OCI-LY7 (cell line): ENCODE measurements at regions of chr12 and their contacts with region 1.

Region 1: DNA sequence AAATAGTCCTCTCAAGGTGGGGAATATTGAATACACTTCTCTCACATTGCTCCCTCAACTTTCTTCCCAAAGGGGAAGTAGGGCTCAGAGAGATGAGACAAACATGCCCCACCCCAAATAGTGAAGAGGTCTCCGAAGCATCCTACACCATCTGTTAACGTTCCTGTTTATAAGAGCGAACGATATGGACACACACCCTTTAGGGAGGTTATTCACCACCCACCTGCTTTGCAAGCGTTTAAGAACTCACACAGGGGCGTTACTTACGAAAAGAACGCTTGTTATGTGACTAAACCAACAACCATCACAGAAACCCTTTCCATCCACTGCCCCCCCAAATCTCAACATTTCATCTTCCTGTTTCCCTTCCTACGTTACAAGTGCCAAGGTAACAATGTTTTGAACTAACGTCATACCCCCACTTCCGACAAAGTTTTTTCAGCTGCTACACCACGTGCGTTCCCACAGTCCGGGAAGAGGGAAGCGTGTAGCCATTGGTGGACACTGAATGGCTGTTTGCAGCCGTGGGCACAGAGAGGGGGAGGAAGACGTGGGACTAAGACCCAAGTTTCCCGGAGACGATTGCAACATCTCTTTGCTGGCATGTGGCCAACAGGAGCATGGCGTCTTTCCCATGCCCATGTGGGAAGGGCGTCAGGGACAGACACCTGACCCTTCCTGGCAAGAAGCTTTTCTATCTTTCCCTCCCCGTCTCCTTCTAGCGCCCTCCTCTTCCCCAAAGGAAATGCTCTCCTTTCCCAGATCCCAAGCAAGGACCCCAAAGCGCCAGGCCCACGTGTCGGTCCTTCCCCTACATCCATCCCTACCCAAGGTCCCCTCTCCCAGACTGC is 1.2 kb downstream of the YBX3 start:
- DNase-seq: peak; percentile 71
- H3K4me3 ChIP-seq: peak overlapping the region; percentile 80
- H3K27ac ChIP-seq: peak overlapping the region; percentile 55
- H3K4me1 ChIP-seq: peaks cover 28% of the 10 kb centered on the region
- CTCF ChIP-seq: no peak

Region 2: DNA sequence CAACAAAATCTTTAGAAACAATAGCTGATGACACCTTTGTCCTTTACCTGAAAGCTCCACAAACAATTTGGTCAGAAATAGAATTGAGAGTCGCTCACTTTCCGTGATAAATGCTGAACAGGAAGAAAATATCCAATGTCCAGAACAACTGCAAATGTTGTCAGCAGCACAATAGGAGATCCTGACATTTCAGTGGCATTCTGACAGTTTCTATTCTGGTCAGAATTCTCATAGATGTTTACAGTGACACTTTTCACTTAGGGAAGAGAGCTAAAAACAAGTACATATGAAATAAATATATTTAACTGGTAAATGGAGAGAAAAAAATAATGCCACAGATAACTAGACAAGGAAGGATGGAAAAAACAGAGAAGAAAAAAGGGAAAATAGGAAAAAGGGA is 147.6 kb before region 1 on chr12:
- CTCF ChIA-PET with region 1: no interaction called
- POLR2A ChIA-PET with region 1: no interaction called
- intact Hi-C with region 1: no loop called
- DNase-seq: no peak
- H3K4me3 ChIP-seq: no peak overlapping the region
- H3K27ac ChIP-seq: no peak overlapping the region
- H3K4me1 ChIP-seq: no peaks in the 10 kb centered on the region
- CTCF ChIP-seq: no peak

Region 3: GRCh38 chr12:10613349-10614055 is 108.4 kb before region 1 on chr12 and contains the start of gene MAGOHB:
- CTCF ChIA-PET with region 1: no interaction called
- POLR2A ChIA-PET with region 1: interaction called, 6 read pairs
- intact Hi-C with region 1: loop called (anchors 1 kb)
- DNase-seq: peak; percentile 97
- H3K4me3 ChIP-seq: peak within 1 kb of the TSS; percentile 91
- H3K27ac ChIP-seq: peak within 1 kb of the TSS; percentile 60
- H3K4me1 ChIP-seq: peaks cover 21% of the 10 kb centered on the region
- CTCF ChIP-seq: no peak
- total RNA-seq, gene MAGOHB: 35.6 and 44.4 TPM in 2 replicates

Region 4: GRCh38 chr12:10749700-10750384 is 28.0 kb after region 1 on chr12:
- CTCF ChIA-PET with region 1: no interaction called
- POLR2A ChIA-PET with region 1: interaction called, 4 read pairs
- intact Hi-C with region 1: loop called (anchors 2 kb)
- DNase-seq: peak; percentile 87
- H3K4me3 ChIP-seq: no peak overlapping the region
- H3K27ac ChIP-seq: no peak overlapping the region
- H3K4me1 ChIP-seq: peaks cover 5% of the 10 kb centered on the region
- CTCF ChIP-seq: peak; percentile 100

Region 5: DNA sequence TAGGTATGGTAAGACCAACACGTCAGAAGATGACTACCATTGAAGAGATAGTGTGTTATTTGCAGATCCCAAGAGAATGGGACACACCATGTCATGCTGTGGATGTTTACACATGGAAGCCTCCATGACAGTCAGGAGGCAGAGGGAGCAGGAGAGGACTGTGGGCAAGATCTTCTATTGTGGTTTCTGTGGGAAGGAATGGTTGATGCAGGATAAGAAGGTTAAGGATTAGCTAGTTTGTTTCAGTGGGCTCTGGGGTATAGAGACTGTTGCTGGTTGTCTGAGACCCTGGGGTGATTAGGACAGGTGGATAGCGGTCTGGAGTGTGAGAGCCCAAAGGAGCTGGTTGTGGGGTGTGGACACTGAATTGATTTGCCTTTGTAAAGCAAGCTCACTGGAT is 57.2 kb after region 1 on chr12:
- CTCF ChIA-PET with region 1: no interaction called
- POLR2A ChIA-PET with region 1: no interaction called
- intact Hi-C with region 1: no loop called
- DNase-seq: no peak
- H3K4me3 ChIP-seq: no peak overlapping the region
- H3K27ac ChIP-seq: no peak overlapping the region
- H3K4me1 ChIP-seq: no peaks in the 10 kb centered on the region
- CTCF ChIP-seq: no peak

Region 6: GRCh38 chr12:11171145-11171968 is 449.5 kb after region 1 on chr12 and contains the start of gene SMIM10L1:
- CTCF ChIA-PET with region 1: no interaction called
- POLR2A ChIA-PET with region 1: no interaction called
- intact Hi-C with region 1: loop called (anchors 2 kb)
- DNase-seq: peak; percentile 97
- H3K4me3 ChIP-seq: peak within 1 kb of the TSS; percentile 77
- H3K27ac ChIP-seq: peak within 1 kb of the TSS; percentile 83
- H3K4me1 ChIP-seq: peaks cover 22% of the 10 kb centered on the region
- CTCF ChIP-seq: no peak; the same call in 1 of the 2 replicates
- total RNA-seq, gene SMIM10L1: 5.8 and 8.4 TPM in 2 replicates